Dorsolateral prefrontal cortex (tissue), 120 donors: ENCODE measurements at regions of chrX and their contacts with region 1.

Region 1: GRCh38 chrX:48696301-48697181 is at the start of gene SUV39H1:
- DNase-seq: peak; percentile 68 to 91 (median 86)
- H3K4me3 ChIP-seq: peak within 1 kb of the TSS; percentile 41 to 75 (median 61)
- H3K27ac ChIP-seq: peak within 1 kb of the TSS; percentile 51 to 96 (median 89)
- H3K27me3 ChIP-seq: peaks cover 0 to 45% (median 7%) of the 10 kb centered on the region in 45 donors
- CTCF ChIP-seq: peak in 6 of 56 donors; percentile 5 to 20 (median 9)
- total RNA-seq, gene SUV39H1: 2.4 to 11.8 (median 6.3) TPM

Region 2: DNA sequence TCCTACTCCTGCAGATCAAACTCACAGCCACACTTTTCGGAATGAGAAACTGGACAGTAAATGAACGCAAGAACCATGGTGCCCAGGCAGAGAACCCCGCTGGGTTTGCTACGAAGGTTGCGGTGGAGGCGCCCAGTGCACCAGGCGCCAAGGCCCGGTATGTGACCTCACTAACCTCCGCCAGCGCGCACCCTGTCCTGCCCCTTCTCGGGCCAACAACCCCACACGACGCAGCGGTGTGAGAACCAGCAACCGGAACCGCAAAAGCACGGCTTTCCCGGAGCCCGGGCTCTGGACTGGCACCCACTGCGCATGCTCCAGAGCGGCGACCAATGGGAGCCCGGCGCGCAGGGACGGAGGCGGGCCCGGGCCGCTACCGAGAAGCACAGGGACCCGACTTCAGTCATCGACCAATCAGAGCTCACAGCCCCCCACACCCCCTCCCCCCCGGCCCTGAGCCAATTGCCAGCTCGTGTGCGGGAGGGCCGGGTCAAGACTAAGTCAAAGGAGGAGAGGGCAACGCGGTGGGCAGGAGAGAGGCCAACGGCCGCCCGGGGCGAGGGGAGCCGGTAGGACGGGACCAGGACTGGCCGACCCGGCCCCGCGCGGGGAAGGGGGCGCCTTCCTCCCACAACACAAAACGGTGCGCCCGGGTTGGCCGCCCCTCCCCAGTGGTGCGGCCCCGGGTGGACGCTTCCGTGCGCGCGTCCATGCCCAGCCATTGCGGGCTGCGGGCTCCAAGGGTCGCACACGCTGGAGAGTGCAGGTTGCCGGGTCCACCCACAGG is 20.2 kb before region 1 on chrX:
- intact Hi-C with region 1: loop called in 1 of 2 experiments (anchors 2 kb)
- DNase-seq: peak; percentile 70 to 90 (median 81)
- H3K4me3 ChIP-seq: peak overlapping the region; percentile 40 to 85 (median 71)
- H3K27ac ChIP-seq: peak overlapping the region in 56 of 59 donors; percentile 16 to 88 (median 81)
- H3K27me3 ChIP-seq: peaks cover 0 to 67% (median 9%) of the 10 kb centered on the region in 45 donors
- CTCF ChIP-seq: peak in 6 of 56 donors; percentile 7 to 28 (median 16)

Region 3: GRCh38 chrX:48737213-48737938 is 40.8 kb after region 1 on chrX:
- intact Hi-C with region 1: loop called (anchors 2 to 5 kb)
- DNase-seq: peak; percentile 75 to 93 (median 90)
- H3K4me3 ChIP-seq: peak overlapping the region; percentile 30 to 81 (median 65)
- H3K27ac ChIP-seq: peak overlapping the region in 58 of 59 donors; percentile 62 to 95 (median 88)
- H3K27me3 ChIP-seq: peaks cover 0 to 31% (median 3%) of the 10 kb centered on the region in 45 donors
- CTCF ChIP-seq: peak in 5 of 56 donors; percentile 1 to 12 (median 6)

Region 4: DNA sequence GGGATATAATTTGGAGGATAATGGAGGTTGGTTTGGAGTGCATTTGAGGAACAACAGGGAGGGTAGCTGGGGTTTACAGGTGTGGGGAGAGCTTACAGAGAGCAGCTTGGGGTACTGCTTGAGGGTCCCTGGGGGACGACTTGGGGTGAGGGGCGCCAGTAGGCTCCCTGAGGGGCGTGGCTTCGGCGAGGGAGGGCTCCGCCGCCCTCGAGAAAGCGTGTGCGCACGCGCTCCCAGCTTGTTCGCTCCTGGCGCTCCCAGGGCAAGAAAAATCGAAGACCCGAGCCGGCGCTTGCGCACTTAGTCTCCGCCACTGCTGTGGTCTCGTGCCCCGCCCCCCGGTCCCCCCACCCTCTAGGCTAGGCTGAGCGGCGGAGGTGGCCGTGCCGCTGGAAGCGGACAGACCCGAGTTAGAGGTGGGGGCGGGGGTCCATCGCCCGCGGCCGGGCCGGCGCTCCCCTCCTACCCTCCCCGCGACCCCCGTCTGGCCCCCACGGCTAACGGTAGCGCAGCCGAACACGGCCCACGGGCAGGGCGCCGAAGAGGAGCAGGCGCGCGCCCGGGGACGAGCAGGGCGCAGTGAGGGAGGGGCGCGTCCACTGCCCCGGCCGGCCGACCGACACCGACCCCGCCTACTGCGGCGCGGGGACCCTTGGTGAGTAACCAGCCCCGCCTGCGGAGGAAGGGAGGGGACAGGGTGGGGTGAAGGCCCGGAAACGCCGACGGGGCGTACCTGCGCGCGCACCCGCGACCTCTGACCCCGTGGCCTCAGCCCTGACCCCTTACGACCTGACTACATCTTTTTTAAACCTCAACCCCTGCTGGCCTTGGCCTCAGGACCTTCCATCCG is 356.9 kb after region 1 on chrX:
- intact Hi-C with region 1: no loop called
- DNase-seq: peak in 4 of 10 donors; percentile 23 to 61 (median 58)
- H3K4me3 ChIP-seq: peak overlapping the region; percentile 34 to 71 (median 57)
- H3K27ac ChIP-seq: peak overlapping the region in 49 of 59 donors; percentile 21 to 87 (median 69)
- H3K27me3 ChIP-seq: peaks cover 0 to 28% (median 2%) of the 10 kb centered on the region in 45 donors
- CTCF ChIP-seq: no peak